Activated B cell treated with CpG ODN at 0.5 μM for 24 hours (primary cell): ENCODE measurements at regions of chr17 and their contacts with region 1.

Region 1: GRCh38 chr17:49191917-49192741 is 18.2 kb downstream of the GNGT2 start:
- DNase-seq: peak; percentile 96
- ATAC-seq: peak; percentile 40
- H3K4me3 Mint-ChIP-seq: peak overlapping the region; percentile 92
- H3K27ac Mint-ChIP-seq: peak overlapping the region; percentile 97
- H3K4me1 Mint-ChIP-seq: peaks cover 38% of the 10 kb centered on the region
- H3K27me3 Mint-ChIP-seq: peaks cover 2% of the 10 kb centered on the region
- CTCF ChIP-seq: no peak

Region 2: DNA sequence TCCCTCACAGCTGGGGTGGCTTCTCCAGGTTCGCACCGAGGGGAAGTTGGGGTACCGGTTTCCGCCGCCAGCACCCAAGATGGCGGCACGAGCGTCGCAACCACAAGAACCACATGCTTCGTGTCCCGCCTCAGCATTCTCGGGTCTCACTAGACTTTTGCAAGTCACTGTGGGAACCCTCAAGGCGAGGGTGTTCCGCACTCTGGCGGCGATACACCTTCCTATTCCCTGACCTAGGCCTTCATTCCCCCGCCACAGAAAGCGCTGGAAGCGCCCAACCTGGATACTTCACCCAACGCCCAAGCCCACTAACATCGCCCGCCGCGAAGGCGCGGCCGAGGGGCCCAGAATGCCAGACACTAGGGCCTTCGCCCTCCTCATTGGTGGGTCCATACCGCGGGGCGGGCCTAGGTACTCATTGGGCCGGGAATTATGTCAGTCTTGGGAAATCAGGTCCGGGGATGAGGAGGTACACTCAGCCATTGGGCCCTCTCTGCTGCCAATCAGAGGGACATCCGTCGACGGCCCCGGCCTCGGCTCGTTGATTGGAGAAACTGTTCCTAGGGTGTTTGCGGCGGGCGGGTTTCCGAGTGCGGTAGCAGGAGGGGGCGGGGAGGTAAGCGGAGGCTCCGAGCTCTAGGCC is 1144.3 kb before region 1 on chr17 and contains the start of gene NFE2L1:
- CTCF ChIA-PET with region 1: no interaction called
- POLR2A ChIA-PET with region 1: no interaction called
- intact Hi-C with region 1: loop called (anchors 5 kb)
- DNase-seq: peak; percentile 89
- ATAC-seq: peak; percentile 94
- H3K4me3 Mint-ChIP-seq: peak within 1 kb of the TSS; percentile 97
- H3K27ac Mint-ChIP-seq: peak within 1 kb of the TSS; percentile 100
- H3K4me1 Mint-ChIP-seq: peaks cover 62% of the 10 kb centered on the region
- H3K27me3 Mint-ChIP-seq: no peaks in the 10 kb centered on the region
- CTCF ChIP-seq: no peak
- total RNA-seq, gene NFE2L1: 127 and 141 TPM in 2 replicates

Region 3: DNA sequence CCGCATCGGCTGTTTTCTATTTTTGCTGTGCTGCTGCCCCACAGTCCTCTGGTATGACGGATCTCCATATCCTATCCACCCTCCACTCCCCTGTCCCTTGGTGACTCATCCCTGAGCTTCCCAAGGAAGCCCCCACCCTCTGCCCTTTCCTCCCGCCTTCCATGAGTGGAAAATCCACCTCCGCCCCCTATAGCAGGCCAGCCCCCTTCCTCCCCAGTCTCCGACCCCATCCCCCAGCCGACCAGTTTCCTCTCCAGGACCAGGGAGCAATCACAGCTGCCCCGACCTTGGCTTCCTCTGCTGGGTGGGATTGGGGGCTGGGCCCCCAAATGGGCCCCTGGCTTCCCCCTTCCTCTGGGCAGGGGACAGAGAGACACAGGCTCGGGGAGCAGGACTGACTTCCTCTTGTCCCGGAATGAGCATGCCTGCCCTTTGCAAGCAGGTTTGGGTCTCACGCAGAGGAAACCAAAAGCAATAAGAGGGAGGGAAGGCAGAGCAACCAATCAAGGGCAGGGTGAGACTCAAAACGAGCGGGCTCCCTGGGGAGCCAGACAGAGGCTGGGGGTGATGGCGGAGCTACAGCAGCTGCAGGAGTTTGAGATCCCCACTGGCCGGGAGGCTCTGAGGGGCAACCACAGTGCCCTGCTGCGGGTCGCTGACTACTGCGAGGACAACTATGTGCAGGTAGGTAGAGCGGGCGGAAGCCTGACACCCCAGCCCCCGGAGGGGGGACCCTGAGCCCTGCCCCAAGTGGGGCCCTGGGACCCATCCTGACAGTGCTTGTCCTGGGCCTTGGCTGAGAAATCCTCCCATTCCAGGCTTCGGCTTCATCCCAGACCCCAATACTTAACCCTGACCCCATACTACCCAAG is 18.3 kb after region 1 on chr17 and contains the starts of genes ABI3 and GNGT2:
- CTCF ChIA-PET with region 1: interaction called, 41 read pairs
- POLR2A ChIA-PET with region 1: interaction called, 259 read pairs
- intact Hi-C with region 1: loop called (anchors 1 kb)
- DNase-seq: peak; percentile 64
- ATAC-seq: peak; percentile 96
- H3K4me3 Mint-ChIP-seq: peak within 1 kb of the TSS; percentile 84
- H3K27ac Mint-ChIP-seq: peak within 1 kb of the TSS; percentile 87
- H3K4me1 Mint-ChIP-seq: peaks cover 64% of the 10 kb centered on the region
- H3K27me3 Mint-ChIP-seq: no peaks in the 10 kb centered on the region
- CTCF ChIP-seq: no peak
- total RNA-seq, gene ABI3: 6.5 and 9.7 TPM in 2 replicates
- total RNA-seq, gene GNGT2: 8.1 and 9.8 TPM in 2 replicates

Region 4: DNA sequence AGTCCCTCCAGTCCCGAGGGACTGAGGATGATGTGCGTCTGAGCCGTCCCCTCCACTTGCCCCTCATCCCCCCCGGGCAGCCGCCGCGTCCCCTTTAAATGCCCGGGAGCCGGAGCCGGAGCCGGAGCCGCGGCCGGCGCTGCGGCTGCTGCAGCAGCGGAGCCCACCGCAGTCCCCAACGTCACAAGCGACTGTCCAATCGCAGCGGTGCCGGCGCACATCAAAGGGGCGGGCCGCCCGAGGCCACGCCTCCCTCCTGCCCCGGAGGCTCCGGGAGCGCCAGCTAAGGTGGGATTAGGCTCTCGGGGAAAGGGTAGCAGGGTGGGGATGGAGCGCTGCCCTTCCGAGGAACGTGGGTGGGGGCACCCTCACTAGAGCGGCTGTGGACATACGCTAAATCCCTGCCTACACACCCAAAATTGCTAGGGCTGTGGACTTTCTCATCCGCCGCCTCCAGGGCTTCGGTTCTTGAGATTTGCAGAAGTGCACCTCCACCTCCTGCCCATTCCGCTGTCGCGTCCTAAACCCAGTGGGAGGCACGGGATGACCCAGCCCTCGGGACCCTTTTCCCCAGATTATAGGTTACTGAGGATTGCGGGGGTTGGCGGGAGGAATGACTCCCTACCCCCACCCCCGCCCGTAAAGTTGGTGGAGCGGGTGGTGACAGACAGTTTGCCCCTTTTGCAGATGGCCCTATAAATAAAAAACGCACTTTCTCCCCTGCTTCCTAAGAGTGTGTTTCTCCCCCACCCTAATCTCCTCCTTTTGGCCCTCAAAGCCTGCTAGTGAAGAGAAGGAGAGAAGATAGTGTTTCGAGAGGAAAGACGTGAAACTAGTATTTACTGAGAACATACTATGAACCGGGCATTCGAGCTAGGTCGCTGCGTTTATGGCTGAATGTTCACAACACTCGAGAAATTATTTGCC is 38.8 kb after region 1 on chr17 and contains the start of gene PHOSPHO1:
- CTCF ChIA-PET with region 1: interaction called, 91 read pairs
- POLR2A ChIA-PET with region 1: interaction called, 91 read pairs
- intact Hi-C with region 1: loop called (anchors 1 kb)
- DNase-seq: peak; percentile 89
- ATAC-seq: peak; percentile 94
- H3K4me3 Mint-ChIP-seq: peak within 1 kb of the TSS; percentile 80
- H3K27ac Mint-ChIP-seq: no peak within 1 kb of the TSS
- H3K4me1 Mint-ChIP-seq: peaks cover 17% of the 10 kb centered on the region
- H3K27me3 Mint-ChIP-seq: peaks cover 7% of the 10 kb centered on the region
- CTCF ChIP-seq: no peak
- total RNA-seq, gene PHOSPHO1: 0.59 TPM in 1 of 2 replicates, not detected in the other

Region 5: GRCh38 chr17:49390548-49391324 is 198.6 kb after region 1 on chr17:
- CTCF ChIA-PET with region 1: no interaction called
- POLR2A ChIA-PET with region 1: interaction called, 6 read pairs
- intact Hi-C with region 1: loop called (anchors 5 kb)
- DNase-seq: peak; percentile 29
- ATAC-seq: peak; percentile 51
- H3K4me3 Mint-ChIP-seq: peak overlapping the region; percentile 77
- H3K27ac Mint-ChIP-seq: peak overlapping the region; percentile 98
- H3K4me1 Mint-ChIP-seq: peaks cover 77% of the 10 kb centered on the region
- H3K27me3 Mint-ChIP-seq: no peaks in the 10 kb centered on the region
- CTCF ChIP-seq: no peak